Activated CD4-positive, alpha-beta memory T cell treated with anti-CD3 and anti-CD28 coated beads for 36 hours (primary cell): ENCODE measurements at regions of chr6 and their contacts with region 1.

Region 1: DNA sequence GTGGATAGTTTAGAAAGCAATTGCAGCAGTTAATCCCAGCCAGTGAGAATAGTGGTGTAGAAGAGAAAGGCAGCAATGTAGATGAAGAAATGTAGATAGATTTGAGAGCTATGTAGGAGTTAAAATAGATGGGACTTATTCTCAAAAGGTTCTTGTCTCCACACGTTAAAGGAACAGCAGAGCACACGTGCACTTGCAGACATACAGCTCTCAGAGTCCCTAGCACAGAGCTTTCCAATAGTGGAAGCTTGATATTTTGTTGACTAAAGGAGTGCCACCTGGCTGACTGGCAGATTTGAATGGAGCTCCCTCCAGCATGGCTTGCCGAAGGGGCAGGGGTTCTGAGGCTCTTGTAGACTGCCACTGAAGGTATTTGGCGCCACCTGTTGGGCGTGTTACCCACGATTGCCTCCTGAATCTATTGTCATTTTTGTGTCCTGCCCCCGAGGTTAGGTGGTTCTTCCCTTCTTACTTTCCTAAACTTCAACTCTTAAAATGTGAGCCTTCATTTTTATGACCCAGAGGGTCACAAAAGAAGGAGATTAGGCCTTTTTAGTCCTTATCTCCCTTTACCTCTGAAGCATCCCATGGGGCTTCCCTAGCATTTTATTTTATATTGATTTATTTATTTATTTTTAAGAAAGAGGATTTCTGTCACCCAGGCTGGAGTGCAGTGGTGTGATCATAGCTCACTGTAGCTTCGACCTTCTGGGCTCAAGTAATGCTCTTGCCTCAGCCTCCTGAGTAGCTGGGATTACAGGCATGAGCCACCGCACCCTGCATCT is 16.4 kb downstream of the BRD2 start:
- DNase-seq: peak; percentile 93
- H3K4me3 Mint-ChIP-seq: no peak overlapping the region
- H3K27ac Mint-ChIP-seq: no peak overlapping the region
- H3K4me1 Mint-ChIP-seq: peaks cover 19% of the 10 kb centered on the region
- H3K27me3 Mint-ChIP-seq: no peaks in the 10 kb centered on the region

Region 2: DNA sequence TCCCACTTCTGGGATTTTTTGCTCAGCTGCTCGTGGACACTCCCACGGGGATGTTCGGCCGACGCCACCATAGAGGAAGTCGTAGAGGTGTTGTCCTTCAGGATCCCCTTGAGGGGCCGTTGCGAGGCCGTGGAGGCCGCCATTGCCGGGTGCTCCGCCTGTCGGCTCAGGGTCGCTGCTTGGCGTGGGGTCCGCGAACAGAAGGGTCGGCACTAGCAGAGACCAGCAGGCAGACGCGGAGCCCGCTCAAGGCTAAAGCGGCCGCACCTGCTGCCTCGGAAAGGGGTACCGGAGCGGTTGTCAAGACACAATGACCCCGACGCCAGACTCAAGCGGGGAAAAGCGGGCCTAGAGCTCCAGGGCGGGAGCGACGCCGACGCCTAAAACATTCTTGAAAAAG is 105.1 kb before region 1 on chr6:
- CTCF ChIA-PET with region 1: interaction called, 108 read pairs
- POLR2A ChIA-PET with region 1: no interaction called
- intact Hi-C with region 1: no loop called
- DNase-seq: no peak
- H3K4me3 Mint-ChIP-seq: no peak overlapping the region
- H3K27ac Mint-ChIP-seq: no peak overlapping the region
- H3K4me1 Mint-ChIP-seq: peaks cover 17% of the 10 kb centered on the region
- H3K27me3 Mint-ChIP-seq: no peaks in the 10 kb centered on the region

Region 3: DNA sequence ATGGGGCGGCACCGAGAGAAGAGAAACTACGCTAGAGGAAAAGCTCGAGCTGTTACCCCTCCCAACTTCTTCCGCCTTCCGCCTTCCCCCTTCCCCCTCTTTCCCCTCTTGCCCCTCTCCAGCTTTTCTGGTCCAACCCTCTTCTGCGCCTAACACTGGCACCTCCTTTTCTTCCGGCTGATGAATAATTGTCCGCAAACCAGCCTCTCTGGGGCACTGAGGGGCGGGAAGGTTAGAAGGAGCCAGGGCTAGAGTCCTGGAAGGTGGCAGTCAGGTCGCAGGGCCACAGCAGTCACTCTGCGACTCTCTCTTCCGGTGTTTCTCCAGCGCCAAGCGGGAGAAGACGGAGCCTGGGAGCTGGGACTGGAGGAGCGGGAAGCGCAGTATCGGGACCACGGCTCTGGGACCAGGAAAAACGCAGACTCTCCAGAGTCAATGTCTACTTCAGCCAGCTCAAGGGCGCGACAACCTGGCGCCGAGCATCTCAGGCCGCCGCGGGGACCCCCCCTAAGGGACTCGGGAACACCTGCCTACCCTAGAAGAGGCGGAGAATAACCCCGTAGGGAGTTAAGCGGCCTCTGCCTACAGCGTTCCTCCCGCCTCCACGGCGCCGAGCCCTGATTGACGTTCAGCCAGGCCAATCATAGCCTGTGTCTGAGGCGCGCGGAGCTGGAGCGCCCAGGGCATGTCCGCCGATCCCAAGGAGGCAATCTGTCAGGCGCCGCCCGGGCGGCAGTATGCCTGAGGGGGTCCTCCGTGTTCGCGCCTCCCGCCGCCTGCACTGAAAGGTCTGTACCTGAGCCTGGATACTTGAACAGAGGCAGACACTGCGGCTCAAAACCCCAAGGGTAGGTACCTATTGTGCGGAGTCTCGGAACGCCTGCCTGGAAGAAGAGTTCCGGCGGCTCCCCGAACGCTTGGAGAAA is 90.5 kb before region 1 on chr6:
- CTCF ChIA-PET with region 1: interaction called, 57 read pairs
- POLR2A ChIA-PET with region 1: no interaction called
- intact Hi-C with region 1: no loop called
- DNase-seq: peak; percentile 97
- H3K4me3 Mint-ChIP-seq: peak overlapping the region; percentile 98
- H3K27ac Mint-ChIP-seq: peak overlapping the region; percentile 94
- H3K4me1 Mint-ChIP-seq: peaks cover 35% of the 10 kb centered on the region
- H3K27me3 Mint-ChIP-seq: no peaks in the 10 kb centered on the region

Region 4: DNA sequence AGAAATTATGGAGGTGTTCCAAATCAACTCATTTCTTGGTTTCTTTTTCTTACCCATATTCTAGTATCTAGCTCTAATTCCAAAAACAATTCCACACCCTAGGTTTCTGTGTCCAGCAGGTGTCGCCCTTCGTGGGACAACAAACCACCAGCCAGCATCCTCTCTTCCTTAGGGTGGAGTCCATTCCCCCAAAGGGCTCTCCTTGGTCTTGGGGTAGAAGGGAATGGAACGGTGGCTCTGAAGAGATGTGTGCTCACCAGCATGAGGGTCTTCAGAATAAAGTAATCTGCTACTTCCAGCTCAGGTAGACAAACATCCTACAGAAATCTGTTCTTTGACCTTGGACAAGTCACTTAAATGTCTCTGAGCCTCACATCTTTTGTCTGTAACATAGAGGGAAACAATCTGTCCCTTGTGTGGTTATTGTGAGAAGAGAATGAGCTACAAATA is 51.1 kb before region 1 on chr6:
- CTCF ChIA-PET with region 1: interaction called, 384 read pairs
- POLR2A ChIA-PET with region 1: interaction called, 4 read pairs
- intact Hi-C with region 1: loop called (anchors 1 kb)
- DNase-seq: peak; percentile 84
- H3K4me3 Mint-ChIP-seq: no peak overlapping the region
- H3K27ac Mint-ChIP-seq: no peak overlapping the region
- H3K4me1 Mint-ChIP-seq: no peaks in the 10 kb centered on the region
- H3K27me3 Mint-ChIP-seq: no peaks in the 10 kb centered on the region

Region 5: DNA sequence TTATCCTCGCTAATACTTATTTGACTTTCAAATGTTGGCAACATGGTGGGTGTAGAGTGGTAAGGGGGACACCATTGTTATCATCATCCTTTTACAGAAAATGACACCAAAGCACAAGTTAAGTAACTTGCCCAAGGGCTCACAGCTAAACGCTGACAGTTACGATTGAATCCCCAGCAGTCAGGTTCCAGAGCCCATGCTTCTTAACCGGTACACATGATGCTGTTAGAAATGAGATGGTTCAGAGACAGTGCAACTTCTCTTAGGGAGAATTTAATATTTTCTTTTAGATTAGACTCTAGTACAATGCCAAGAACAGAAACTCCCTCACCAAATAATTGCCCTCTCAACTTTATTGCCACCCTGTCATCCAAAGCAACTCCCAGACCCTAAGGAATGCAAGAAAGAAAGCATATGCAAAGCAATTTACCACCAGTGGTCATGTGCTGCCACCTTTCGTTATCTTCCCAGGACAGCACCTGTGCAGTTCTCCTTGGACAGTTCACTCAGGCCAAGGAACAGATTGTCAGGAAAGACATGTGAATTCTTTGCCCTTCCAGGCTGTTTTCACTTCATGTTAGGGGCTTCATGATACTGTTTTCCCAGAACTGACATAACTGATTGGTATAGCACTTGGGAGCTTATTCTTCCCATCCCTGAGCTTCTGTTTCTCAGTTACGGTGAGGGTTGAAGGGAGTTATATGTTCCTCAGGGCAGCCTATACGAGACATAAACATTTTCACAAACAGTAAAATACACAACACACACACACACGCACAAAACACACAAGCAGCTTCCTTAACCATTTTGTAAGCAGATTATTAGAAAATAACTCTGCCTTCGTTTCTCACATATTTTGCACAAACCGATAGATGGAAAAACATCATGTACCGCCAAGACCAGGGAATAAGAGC is 37.0 kb before region 1 on chr6:
- CTCF ChIA-PET with region 1: interaction called, 104 read pairs
- POLR2A ChIA-PET with region 1: no interaction called
- intact Hi-C with region 1: loop called (anchors 2 kb)
- DNase-seq: peak; percentile 63
- H3K4me3 Mint-ChIP-seq: no peak overlapping the region
- H3K27ac Mint-ChIP-seq: no peak overlapping the region
- H3K4me1 Mint-ChIP-seq: peaks cover 50% of the 10 kb centered on the region
- H3K27me3 Mint-ChIP-seq: no peaks in the 10 kb centered on the region

Region 6: DNA sequence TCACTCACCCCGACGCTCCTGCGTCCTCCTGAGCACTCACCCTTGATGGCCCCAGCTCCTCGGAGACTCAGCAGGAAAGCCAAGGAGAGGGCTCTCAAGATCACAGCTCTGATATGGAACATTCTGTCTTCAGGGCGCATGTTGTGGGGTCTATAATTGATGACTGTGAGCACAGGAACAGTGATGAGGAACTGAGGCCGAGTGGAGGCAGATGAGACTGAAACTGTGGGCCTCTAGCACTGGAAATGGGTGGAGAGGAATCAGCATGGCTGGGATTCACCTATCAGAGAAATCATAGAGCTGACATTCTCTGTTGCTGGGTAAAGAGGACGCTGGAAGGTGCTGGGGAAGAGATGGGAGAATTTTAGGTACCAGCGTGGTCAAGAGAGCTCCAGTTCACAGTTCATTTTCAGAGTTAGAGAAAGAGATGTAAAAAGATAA is 88.7 kb after region 1 on chr6 and contains the start of gene HLA-DPA1:
- CTCF ChIA-PET with region 1: interaction called, 10 read pairs
- POLR2A ChIA-PET with region 1: no interaction called
- intact Hi-C with region 1: no loop called
- DNase-seq: peak; percentile 49
- H3K4me3 Mint-ChIP-seq: peak within 1 kb of the TSS; percentile 74
- H3K27ac Mint-ChIP-seq: peak within 1 kb of the TSS; percentile 55
- H3K4me1 Mint-ChIP-seq: peaks cover 33% of the 10 kb centered on the region
- H3K27me3 Mint-ChIP-seq: peaks cover 16% of the 10 kb centered on the region
- total RNA-seq, gene HLA-DPA1: 19.3 to 20.9 TPM